ENCODE measurements at regions of chr2 and their contacts with region 1.

Region 1: DNA sequence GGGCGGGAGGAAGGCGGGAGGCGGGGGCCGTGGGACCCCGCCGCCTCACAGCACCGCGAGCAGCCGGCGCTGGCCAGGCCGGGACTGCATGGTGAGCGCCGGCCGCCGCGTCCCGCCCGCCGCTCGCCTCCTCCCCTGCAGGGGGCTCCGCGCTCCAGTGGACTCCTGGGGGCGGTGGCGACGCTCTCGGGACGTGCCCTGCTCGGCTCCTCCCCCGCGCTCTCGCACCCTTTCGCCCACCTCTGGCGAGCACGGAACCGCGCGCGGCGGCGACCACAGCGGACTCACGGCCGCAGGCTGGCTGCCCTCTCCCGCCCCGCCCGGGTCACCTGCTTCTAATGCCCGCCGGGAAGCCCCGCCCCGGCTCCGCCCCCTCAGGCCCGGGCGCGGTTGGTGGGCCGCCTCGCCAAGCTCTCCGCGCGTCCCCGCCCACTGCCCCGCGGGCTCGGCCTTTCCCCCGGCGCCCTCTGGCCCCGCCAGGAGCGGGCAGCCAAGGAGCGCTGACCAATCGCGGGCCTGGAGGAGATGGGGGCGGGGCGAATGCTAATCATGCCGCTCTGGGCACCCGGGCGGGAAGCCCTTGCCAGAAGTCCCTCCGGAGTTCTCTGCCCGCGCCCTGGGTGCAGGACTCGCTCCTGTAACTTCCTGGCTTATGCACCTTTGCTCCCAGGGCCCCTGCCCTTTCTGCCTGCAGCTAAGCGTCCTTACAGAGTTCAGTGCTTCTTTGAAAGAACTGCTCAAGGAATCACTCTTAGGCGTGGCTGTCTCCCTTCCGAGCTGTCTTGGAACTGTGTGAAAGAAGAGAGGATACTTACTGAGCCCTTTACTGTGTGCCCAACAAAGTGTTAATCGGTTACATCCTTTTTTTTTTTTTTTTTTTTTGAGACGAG is at the start of gene FZD5:
- DNase-seq: peak; percentile 97 to 99 (median 99)
- ATAC-seq: peak; percentile 96 to 97
- H3K4me3 ChIP-seq: peak within 1 kb of the TSS; percentile 70
- H3K27ac ChIP-seq: peak within 1 kb of the TSS; percentile 55
- H3K4me1 ChIP-seq: no peaks in the 10 kb centered on the region
- H3K27me3 ChIP-seq: no peaks in the 10 kb centered on the region
- total RNA-seq, gene FZD5: 3.1 to 6.2 (median 3.7) TPM

Region 2: GRCh38 chr2:207828361-207829057 is 58.7 kb after region 1 on chr2:
- intact Hi-C with region 1: loop called in 1 of 4 experiments (anchors 10 kb)
- DNase-seq: no peak
- ATAC-seq: no peak
- H3K4me3 ChIP-seq: no peak overlapping the region
- H3K27ac ChIP-seq: no peak overlapping the region
- H3K4me1 ChIP-seq: peaks cover 17% of the 10 kb centered on the region
- H3K27me3 ChIP-seq: no peaks in the 10 kb centered on the region

Region 3: GRCh38 chr2:207926133-207926988 is 156.5 kb after region 1 on chr2:
- intact Hi-C with region 1: no loop called
- DNase-seq: peak; percentile 62 to 69 (median 69)
- ATAC-seq: peak; percentile 90 to 95
- H3K4me3 ChIP-seq: no peak overlapping the region
- H3K27ac ChIP-seq: no peak overlapping the region
- H3K4me1 ChIP-seq: peaks cover 2% of the 10 kb centered on the region
- H3K27me3 ChIP-seq: no peaks in the 10 kb centered on the region

Region 4: DNA sequence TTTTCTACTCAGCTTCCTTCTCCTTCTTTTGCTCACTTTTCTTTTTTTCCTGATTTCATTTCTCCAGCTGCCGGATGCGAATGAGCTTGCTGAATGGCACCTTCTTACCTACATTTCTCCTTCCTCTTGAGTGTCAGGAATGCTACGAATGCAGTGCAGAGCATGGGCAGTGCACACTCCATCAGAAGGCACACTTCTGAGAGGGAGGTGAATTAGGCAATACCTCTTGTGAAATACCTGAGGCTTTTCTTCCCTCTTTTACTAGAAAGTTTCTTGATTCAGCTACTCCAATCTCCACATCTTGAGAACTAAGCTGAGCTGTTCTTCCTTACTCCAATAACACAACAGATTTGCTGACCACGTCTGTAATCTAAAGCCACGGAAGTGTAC is 204.4 kb after region 1 on chr2:
- intact Hi-C with region 1: loop called (anchors 5 to 10 kb)
- DNase-seq: no peak
- ATAC-seq: no peak
- H3K4me3 ChIP-seq: no peak overlapping the region
- H3K27ac ChIP-seq: no peak overlapping the region
- H3K4me1 ChIP-seq: no peaks in the 10 kb centered on the region
- H3K27me3 ChIP-seq: no peaks in the 10 kb centered on the region

Region 5: DNA sequence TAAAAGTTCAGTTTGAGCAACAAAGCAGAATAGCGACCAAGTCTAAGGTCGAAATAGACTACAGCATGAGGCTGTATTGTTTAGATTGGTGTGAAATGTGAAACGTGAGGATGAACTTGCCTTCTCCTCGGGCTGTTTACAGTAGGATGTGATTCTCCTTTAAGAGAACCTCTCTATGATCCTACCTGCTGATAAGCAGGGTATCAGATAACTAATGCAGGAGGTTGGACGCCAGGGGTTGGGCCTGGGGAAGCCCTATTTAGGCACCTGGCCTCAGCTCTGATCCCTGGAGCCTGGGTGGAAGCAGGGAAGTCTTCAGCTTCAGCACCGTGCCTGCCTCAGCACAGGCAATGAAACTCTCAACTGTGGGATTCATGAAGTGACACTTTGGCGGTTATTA is 343.1 kb after region 1 on chr2:
- intact Hi-C with region 1: no loop called
- DNase-seq: no peak
- ATAC-seq: no peak
- H3K4me3 ChIP-seq: no peak overlapping the region
- H3K27ac ChIP-seq: no peak overlapping the region
- H3K4me1 ChIP-seq: peaks cover 1% of the 10 kb centered on the region
- H3K27me3 ChIP-seq: no peaks in the 10 kb centered on the region

Region 6: DNA sequence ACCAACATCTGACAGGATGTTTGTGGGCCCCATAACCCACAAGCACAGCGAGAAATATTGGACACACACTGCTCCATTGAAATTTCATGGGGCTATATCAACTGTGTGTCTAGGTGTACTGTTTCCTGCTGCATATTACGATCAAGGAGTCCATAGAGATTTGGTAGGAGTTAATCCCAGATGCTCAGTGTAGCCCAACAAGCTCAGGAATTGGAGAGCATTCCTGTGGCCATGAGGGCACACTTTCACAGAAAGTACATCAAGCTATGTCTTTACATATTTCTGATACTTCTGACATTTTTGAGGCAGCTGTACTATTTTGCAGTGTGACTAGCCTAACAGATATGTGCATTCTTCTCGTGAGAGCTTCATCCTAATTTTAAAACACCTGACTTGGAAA is 1109.8 kb after region 1 on chr2:
- intact Hi-C with region 1: no loop called
- DNase-seq: no peak
- ATAC-seq: no peak
- H3K4me3 ChIP-seq: no peak overlapping the region
- H3K27ac ChIP-seq: no peak overlapping the region
- H3K4me1 ChIP-seq: no peaks in the 10 kb centered on the region
- H3K27me3 ChIP-seq: no peaks in the 10 kb centered on the region

Measured in right cardiac atrium (tissue), 5 donors.